GM12878 (cell line): ENCODE measurements at regions of chr17 and their contacts with region 1.

Region 1: GRCh38 chr17:35373534-35373983 is at the start of gene SLFN11:
- DNase-seq: peak; percentile 30
- ATAC-seq: peak; percentile 80
- H3K4me3 ChIP-seq: peak within 1 kb of the TSS; percentile 70
- H3K27ac ChIP-seq: no peak within 1 kb of the TSS; the same call in 1 of the 2 replicates
- H3K4me1 ChIP-seq: peaks cover 3% of the 10 kb centered on the region
- H3K27me3 ChIP-seq: peaks cover 0 to 9% of the 10 kb centered on the region in 2 experiments; a peak in 3 of 4 replicates
- CTCF ChIP-seq: no peak
- EP300 ChIP-seq: no peak
- POLR2A ChIP-seq: peak; percentile 91
- RAD21 ChIP-seq: no peak
- polyA plus RNA-seq, gene SLFN11: 7.9 to 8.0 TPM

Region 2: GRCh38 chr17:34584805-34585416 is 788.6 kb before region 1 on chr17:
- CTCF ChIA-PET with region 1: no interaction called
- POLR2A ChIA-PET with region 1: no interaction called
- RAD21 ChIA-PET with region 1: no interaction called
- SMC1A ChIA-PET with region 1: no interaction called
- in situ Hi-C with region 1: no loop called
- intact Hi-C with region 1: no loop called
- DNase-seq: no peak
- ATAC-seq: no peak
- H3K4me3 ChIP-seq: no peak overlapping the region
- H3K27ac ChIP-seq: no peak overlapping the region
- H3K4me1 ChIP-seq: no peaks in the 10 kb centered on the region
- H3K27me3 ChIP-seq: peaks cover 12 to 21% of the 10 kb centered on the region in 2 experiments
- CTCF ChIP-seq: peak in 1 of 3 experiments; percentile 25; a peak in 1 of 6 replicates
- EP300 ChIP-seq: no peak
- POLR2A ChIP-seq: no peak
- RAD21 ChIP-seq: 0 out of 2 replicates have a peak, but pooled peaks have one; percentile 29

Region 3: DNA sequence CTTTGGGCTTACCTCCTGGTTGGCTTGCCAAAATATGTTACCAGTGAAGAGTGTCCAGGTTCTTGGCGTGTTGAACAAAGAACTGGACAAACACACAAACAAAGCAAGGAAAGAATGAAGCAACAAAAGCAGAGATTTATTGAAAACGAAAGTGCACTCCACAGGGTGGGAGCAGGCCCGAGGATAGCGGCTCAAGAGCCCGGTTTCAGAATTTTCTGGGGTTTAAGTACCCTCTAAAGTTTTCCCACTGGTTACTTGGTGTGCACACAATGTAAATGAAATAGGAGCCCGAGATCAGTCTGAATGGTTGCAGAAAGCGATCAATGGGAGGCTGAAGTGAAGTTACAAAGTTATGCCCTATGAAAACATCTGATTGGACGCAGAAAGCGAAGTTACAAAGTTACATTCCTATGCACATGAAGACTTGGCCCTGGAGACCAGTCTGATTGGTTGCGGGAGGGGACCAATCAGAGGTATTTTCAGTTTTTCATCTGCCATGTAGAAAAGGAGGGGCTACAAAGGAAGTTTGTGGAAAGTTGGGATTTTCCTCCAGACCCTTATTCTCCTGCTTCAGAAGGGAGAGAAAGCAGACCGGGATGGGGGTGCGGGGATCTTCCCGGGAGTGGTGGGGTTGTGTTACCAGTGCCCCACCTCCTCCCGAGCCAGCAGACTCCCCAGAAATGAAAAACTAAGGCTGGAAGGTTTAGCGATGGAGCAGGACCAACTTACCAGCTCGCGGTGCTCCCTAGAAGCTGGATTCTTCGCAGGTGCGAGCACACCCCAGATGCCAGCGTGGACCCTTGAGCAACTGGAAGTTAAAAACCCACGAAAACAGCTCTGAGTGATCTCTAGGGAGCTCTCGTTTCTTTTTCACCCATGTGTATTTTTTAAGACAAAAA is 58.9 kb after region 1 on chr17 and contains the start of gene SLFN12:
- CTCF ChIA-PET with region 1: no interaction called
- POLR2A ChIA-PET with region 1: interaction called, 4 read pairs
- RAD21 ChIA-PET with region 1: interaction called, 4 read pairs
- SMC1A ChIA-PET with region 1: interaction called, 13 read pairs
- in situ Hi-C with region 1: no loop called
- intact Hi-C with region 1: no loop called
- DNase-seq: peak; percentile 67
- ATAC-seq: peak; percentile 94
- H3K4me3 ChIP-seq: peak within 1 kb of the TSS; percentile 82
- H3K27ac ChIP-seq: peak within 1 kb of the TSS; percentile 90
- H3K4me1 ChIP-seq: peaks cover 16% of the 10 kb centered on the region
- H3K27me3 ChIP-seq: no peaks in the 10 kb centered on the region
- CTCF ChIP-seq: no peak
- EP300 ChIP-seq: no peak
- POLR2A ChIP-seq: 0 out of 2 replicates have a peak, but pooled peaks have one; percentile 28
- RAD21 ChIP-seq: no peak
- polyA plus RNA-seq, gene SLFN12: 11.2 to 14.8 TPM

Region 4: DNA sequence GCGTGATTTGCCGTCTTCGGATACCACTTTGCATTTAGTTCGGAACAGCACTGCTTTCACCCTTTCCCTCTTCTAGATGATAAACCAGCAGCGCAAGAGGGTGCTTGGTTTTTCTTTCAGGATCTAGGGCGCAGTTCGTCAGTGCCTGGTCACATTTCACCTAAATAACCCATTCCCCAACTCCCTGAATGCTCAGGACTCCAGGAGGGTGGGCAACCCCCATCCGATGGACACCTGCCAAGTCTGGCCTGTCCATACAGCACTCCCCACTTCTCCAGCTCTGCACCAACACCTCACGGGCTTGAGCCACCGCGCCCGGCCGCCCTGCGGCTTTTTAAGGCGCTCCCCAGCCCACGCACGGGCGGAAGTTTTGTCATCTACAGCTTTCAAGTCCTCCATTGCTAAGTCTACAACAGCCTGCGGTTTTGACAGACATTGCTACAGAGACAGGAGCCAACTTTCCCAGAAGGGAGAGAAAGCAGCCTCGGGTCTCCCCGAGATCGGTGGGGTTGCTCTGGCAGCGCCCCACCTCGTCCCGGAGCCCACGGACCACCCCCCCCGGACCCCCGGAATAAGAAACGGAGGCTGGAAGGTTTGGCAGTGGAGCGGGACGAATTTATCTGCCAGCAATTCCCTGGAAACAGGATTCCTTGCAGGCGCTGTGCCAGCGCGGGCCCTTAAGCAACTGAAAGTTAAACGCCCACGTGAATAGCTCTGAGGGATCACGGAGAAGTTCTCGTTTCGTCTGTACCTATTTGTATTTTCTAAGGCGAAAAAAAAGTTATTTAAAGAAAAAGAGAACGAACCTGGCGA is 113.6 kb after region 1 on chr17:
- CTCF ChIA-PET with region 1: interaction called, 3 read pairs
- POLR2A ChIA-PET with region 1: interaction called, 3 read pairs
- RAD21 ChIA-PET with region 1: interaction called, 13 read pairs
- SMC1A ChIA-PET with region 1: no interaction called
- in situ Hi-C with region 1: no loop called
- intact Hi-C with region 1: no loop called
- DNase-seq: peak; percentile 23
- ATAC-seq: peak; percentile 88
- H3K4me3 ChIP-seq: peak overlapping the region; percentile 66
- H3K27ac ChIP-seq: peak overlapping the region; percentile 43
- H3K4me1 ChIP-seq: peaks cover 12% of the 10 kb centered on the region
- H3K27me3 ChIP-seq: no peaks in the 10 kb centered on the region
- CTCF ChIP-seq: no peak
- EP300 ChIP-seq: no peak
- POLR2A ChIP-seq: 0 out of 2 replicates have a peak, but pooled peaks have one; percentile 23
- RAD21 ChIP-seq: no peak